H1 (cell line): ENCODE measurements at regions of chr2 and their contacts with region 1.

Region 1: GRCh38 chr2:167264380-167264779 is 376.1 kb downstream of the XIRP2 start:
- DNase-seq: no peak
- H3K4me3 ChIP-seq: no peak overlapping the region
- H3K27ac ChIP-seq: no peak overlapping the region
- H3K4me1 ChIP-seq: no peaks in the 10 kb centered on the region
- H3K27me3 ChIP-seq: no peaks in the 10 kb centered on the region
- CTCF ChIP-seq: peak; percentile 25 to 82 (median 74)
- EP300 ChIP-seq: no peak
- POLR2A ChIP-seq: no peak
- RAD21 ChIP-seq: peak; percentile 87

Region 2: DNA sequence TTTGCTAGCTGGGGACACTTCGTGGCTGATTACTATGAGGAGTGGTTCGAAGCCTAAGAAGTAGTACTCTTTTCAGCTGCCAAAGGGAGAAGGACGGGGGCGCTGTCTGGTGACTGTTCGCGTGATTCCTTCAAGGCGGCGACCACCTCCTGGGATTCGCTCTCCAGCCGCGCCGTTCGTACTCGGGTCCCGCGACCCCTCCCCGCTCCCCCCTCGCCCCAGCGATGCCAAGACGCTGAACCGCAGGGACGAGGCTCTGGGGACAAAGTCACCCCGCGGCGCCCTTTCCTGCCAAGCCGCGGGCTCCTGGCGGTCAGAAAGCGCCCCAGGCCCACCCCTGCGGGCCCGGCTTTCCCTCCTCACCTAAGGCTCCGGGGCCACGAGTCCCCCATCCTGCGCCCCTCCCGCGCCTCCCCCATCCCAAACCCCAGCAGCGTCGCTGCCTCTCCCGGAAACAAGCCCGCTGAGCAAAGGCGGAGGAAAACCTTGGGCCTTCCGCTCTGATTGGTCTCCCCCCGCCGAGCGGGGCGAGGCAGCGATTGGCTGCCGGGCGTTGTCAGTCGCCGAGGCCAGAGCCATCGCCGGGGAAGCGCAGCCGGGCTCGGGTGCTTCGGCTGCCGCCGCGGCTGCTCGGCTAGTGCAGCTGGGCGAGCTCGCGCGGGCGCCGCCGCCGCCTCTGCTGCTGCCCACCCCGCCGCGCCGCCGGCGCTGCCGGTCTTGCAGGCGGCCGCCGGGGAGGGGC is 28.2 kb after region 1 on chr2:
- CTCF ChIA-PET with region 1: interaction called, 10 read pairs
- POLR2A ChIA-PET with region 1: interaction called, 3 read pairs
- DNase-seq: peak; percentile 87 to 92
- H3K4me3 ChIP-seq: peak within 1 kb of the TSS; percentile 79 to 84 (median 80)
- H3K27ac ChIP-seq: peak within 1 kb of the TSS; percentile 66; the same call in 1 of the 2 replicates
- H3K4me1 ChIP-seq: peaks cover 0 to 7% (median 4%) of the 10 kb centered on the region in 4 experiments; a peak in 5 of 7 replicates
- H3K27me3 ChIP-seq: no peaks in the 10 kb centered on the region
- CTCF ChIP-seq: peak; percentile 25 to 61 (median 57); a peak in 3 of 4 replicates
- EP300 ChIP-seq: 0 out of 3 replicates have a peak, but pooled peaks of 1 of the 2 experiments have one; percentile 4
- POLR2A ChIP-seq: peak; percentile 52 to 67
- RAD21 ChIP-seq: peak; percentile 37 to 39

Region 3: GRCh38 chr2:167322795-167323194 is 58.4 kb after region 1 on chr2:
- CTCF ChIA-PET with region 1: no interaction called
- POLR2A ChIA-PET with region 1: no interaction called
- DNase-seq: no peak
- H3K4me3 ChIP-seq: no peak overlapping the region
- H3K27ac ChIP-seq: no peak overlapping the region
- H3K4me1 ChIP-seq: peaks cover 0 to 3% (median 0%) of the 10 kb centered on the region in 4 experiments; a peak in 2 of 7 replicates
- H3K27me3 ChIP-seq: no peaks in the 10 kb centered on the region
- CTCF ChIP-seq: no peak
- EP300 ChIP-seq: no peak
- POLR2A ChIP-seq: no peak
- RAD21 ChIP-seq: no peak

Region 4: DNA sequence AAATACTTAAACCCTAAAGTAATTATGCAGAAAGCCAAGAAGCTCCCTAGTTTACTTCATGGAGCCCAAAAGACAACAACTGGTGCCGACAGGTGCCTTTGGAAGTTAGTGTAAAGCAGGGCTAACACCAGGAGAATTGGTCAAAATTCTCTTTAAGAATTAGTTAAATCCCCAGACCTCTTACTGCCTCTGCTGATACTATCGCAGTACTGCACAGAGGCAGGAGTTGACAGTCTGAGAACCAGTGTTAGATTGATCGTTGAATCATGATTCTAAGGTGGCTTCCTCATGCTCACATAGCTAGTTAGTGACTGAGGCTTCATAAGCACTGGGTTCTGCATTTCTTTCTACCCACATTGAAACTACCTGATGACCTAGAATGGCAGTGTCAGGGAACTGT is 68.9 kb after region 1 on chr2:
- CTCF ChIA-PET with region 1: interaction called, 13 read pairs
- POLR2A ChIA-PET with region 1: no interaction called
- DNase-seq: no peak
- H3K4me3 ChIP-seq: no peak overlapping the region
- H3K27ac ChIP-seq: no peak overlapping the region
- H3K4me1 ChIP-seq: peaks cover 13 to 34% (median 31%) of the 10 kb centered on the region in 4 experiments
- H3K27me3 ChIP-seq: peaks cover 0 to 1% (median 0%) of the 10 kb centered on the region in 4 experiments; a peak in 1 of 7 replicates
- CTCF ChIP-seq: peak in 2 of 3 experiments; percentile 7 to 57; a peak in 1 of 4 replicates
- EP300 ChIP-seq: no peak
- POLR2A ChIP-seq: no peak
- RAD21 ChIP-seq: peak; percentile 28 to 43; a peak in 2 of 4 replicates

Region 5: GRCh38 chr2:167368371-167368770 is 104.0 kb after region 1 on chr2:
- CTCF ChIA-PET with region 1: no interaction called
- POLR2A ChIA-PET with region 1: no interaction called
- DNase-seq: no peak
- H3K4me3 ChIP-seq: no peak overlapping the region
- H3K27ac ChIP-seq: no peak overlapping the region
- H3K4me1 ChIP-seq: peaks cover 0 to 4% (median 0%) of the 10 kb centered on the region in 4 experiments; a peak in 1 of 7 replicates
- H3K27me3 ChIP-seq: no peaks in the 10 kb centered on the region
- CTCF ChIP-seq: no peak
- EP300 ChIP-seq: no peak
- POLR2A ChIP-seq: no peak
- RAD21 ChIP-seq: no peak

Region 6: DNA sequence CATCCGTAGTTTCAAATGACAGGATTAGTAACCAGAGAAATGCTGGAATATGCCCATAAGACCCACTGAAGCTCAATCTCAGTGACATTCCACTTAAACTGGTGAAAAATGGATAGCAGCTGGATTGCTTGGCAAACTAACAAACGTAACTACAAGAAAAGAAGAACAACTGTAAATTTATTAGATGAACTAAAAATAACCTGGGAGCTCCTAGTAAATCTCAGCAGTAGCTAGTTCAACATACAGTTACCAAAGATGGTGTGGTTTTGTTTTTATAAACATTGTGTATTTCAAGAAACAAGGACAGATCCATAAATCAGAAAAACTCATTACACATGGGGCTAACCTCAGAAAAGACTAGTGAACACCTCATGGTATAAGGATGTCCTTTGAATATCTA is 155.8 kb after region 1 on chr2:
- CTCF ChIA-PET with region 1: no interaction called
- POLR2A ChIA-PET with region 1: no interaction called
- DNase-seq: no peak
- H3K4me3 ChIP-seq: no peak overlapping the region
- H3K27ac ChIP-seq: no peak overlapping the region
- H3K4me1 ChIP-seq: peaks cover 0 to 9% (median 3%) of the 10 kb centered on the region in 4 experiments; a peak in 2 of 7 replicates
- H3K27me3 ChIP-seq: no peaks in the 10 kb centered on the region
- CTCF ChIP-seq: no peak
- EP300 ChIP-seq: no peak
- POLR2A ChIP-seq: no peak
- RAD21 ChIP-seq: no peak